ENCODE measurements at regions of chr19 and their contacts with region 1.

Region 1: DNA sequence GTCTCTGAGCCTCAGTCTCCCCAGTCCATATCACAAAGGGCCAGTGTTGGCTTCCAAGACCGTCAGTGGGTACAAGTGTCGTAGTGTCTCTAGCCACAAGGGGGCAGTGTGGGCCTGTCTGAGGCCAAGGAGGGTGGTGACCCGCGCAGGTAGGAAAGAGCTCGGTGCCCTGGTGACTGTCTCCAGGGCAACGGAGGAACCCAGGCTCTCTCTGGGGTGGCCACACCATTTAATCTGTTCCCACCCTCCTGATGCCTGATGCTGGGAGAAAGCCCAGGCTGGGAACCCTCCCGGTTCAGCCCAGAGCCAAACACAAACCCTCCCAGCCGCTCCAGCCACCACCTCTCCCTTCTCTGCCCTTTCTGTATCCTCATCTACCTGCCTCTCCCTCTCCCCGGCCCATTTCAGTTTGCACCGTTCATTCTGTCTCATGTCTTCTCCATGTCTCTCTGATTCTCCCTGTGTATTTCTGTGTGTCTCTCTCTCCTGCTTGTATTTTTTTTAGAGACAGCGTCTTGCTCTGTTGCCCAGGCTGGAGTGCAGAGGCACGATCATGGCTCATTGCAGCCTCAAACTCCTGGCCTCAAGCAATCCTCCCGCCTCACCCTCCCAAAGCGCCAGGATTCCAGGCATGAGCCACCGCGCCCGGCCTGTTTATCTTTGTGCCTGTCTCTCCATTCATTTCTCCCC is 17.5 kb upstream of the MEIS3 start:
- DNase-seq: peak; percentile 47
- ATAC-seq: peak; percentile 96
- H3K4me3 ChIP-seq: no peak overlapping the region
- H3K27ac ChIP-seq: no peak overlapping the region
- H3K4me1 ChIP-seq: no peaks in the 10 kb centered on the region
- H3K27me3 ChIP-seq: peaks cover 15% of the 10 kb centered on the region
- CTCF ChIP-seq: peak; percentile 82
- POLR2A ChIP-seq: no peak
- RAD21 ChIP-seq: peak; percentile 93

Region 2: GRCh38 chr19:47330466-47330869 is 106.4 kb before region 1 on chr19:
- CTCF ChIA-PET with region 1: no interaction called
- POLR2A ChIA-PET with region 1: no interaction called
- dilution Hi-C with region 1: no loop called
- in situ Hi-C with region 1: no loop called
- intact Hi-C with region 1: no loop called
- DNase-seq: peak; percentile 59
- ATAC-seq: peak; percentile 90
- H3K4me3 ChIP-seq: no peak overlapping the region
- H3K27ac ChIP-seq: peak overlapping the region; percentile 60
- H3K4me1 ChIP-seq: peaks cover 3% of the 10 kb centered on the region; the same call in 1 of the 2 replicates
- H3K27me3 ChIP-seq: no peaks in the 10 kb centered on the region
- CTCF ChIP-seq: no peak
- POLR2A ChIP-seq: no peak
- RAD21 ChIP-seq: no peak

Region 3: DNA sequence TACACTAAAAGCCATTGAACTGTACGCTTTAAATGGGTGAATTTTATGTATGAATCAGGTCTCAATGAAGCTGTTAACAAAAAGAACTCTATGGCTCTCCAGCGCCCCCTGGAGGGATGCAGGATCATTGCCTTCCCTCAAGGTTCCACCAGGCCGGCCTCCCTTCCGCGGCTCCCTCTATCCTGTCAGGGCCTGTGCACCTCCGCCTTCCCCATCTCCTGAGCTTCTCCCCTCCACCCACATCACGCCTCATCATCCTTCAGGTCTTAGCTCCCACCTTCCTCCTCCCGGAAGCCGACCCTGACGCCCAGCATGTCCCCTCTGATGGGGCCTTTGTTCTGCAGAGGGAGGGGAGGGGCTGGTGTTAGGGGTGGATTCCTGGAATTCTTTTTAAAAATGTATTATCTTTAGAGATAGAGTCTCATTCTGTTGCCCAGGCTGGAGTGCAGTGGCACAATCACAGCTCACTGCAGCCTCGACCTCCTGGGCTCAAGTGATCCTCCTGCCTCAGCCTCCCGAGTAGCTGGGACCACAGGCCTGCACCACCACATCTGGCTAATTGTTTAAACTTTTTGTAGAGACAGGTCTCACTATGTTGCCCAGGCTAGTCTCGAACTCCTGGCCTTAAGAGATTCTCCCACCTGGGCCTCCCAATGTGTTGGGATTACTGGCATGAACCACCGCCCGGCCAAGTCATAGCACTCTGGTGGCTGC is 45.2 kb before region 1 on chr19:
- CTCF ChIA-PET with region 1: no interaction called
- POLR2A ChIA-PET with region 1: no interaction called
- dilution Hi-C with region 1: no loop called
- in situ Hi-C with region 1: no loop called
- intact Hi-C with region 1: no loop called
- DNase-seq: peak; percentile 66
- ATAC-seq: peak; percentile 95
- H3K4me3 ChIP-seq: no peak overlapping the region
- H3K27ac ChIP-seq: no peak overlapping the region
- H3K4me1 ChIP-seq: peaks cover 3% of the 10 kb centered on the region
- H3K27me3 ChIP-seq: peaks cover 8% of the 10 kb centered on the region; the same call in 1 of the 2 replicates
- CTCF ChIP-seq: peak; percentile 89
- POLR2A ChIP-seq: no peak
- RAD21 ChIP-seq: peak; percentile 82

Region 4: DNA sequence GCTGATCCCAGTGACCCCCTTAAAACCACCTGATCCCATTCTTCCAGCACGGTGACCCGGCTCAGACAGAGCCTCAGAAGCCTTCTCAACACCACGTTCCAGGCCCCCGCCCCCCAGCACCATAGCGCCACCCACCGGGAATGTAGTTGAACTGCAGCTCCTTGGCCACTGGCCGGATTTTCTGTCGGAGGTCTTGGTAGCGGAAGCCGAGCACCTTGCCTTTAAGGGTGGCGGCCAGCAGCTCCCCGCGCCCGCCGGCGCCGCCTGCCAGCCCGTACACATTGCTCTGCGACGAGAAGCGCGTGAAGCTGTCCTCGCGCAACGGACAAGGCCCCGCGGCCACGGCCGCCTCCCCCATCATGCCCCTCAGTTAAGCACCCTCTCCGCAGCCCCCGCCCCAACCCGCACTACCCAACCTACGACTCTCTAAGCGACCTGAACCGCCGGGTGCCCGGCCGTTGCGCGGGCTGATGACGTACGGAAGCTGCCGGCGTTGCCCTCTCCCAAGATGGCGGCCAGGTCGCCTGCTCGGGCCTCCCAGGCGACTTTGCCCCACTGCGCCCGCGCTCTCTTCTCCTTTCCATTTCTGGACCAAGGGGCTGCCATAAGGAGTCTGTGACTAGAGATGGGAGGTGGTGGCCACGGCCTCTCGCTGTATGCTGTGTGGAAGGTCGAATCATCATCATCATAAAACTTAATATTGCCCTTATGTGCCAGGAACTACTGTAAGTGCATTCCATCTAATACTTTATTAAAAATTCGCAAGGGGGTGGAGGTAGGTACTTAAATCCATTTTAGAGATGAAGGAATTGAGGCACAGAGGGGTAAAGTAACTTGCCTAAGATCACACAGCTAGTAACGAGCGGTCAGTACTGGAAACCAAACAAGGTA is 47.2 kb after region 1 on chr19 and contains the start of gene KPTN:
- CTCF ChIA-PET with region 1: interaction called, 5 read pairs
- POLR2A ChIA-PET with region 1: no interaction called
- dilution Hi-C with region 1: no loop called
- in situ Hi-C with region 1: no loop called
- intact Hi-C with region 1: loop called (anchors 5 kb)
- DNase-seq: peak; percentile 90
- ATAC-seq: peak; percentile 91
- H3K4me3 ChIP-seq: peak within 1 kb of the TSS; percentile 64
- H3K27ac ChIP-seq: peak within 1 kb of the TSS; percentile 97
- H3K4me1 ChIP-seq: peaks cover 2% of the 10 kb centered on the region; the same call in 1 of the 2 replicates
- H3K27me3 ChIP-seq: no peaks in the 10 kb centered on the region
- CTCF ChIP-seq: peak; percentile 96
- POLR2A ChIP-seq: peak; percentile 77
- RAD21 ChIP-seq: peak; percentile 57
- total RNA-seq, gene KPTN: 3.9 and 4.1 TPM in 2 replicates

Region 5: GRCh38 chr19:47514869-47515588 is 78.2 kb after region 1 on chr19 and contains the start of gene NAPA:
- CTCF ChIA-PET with region 1: no interaction called
- POLR2A ChIA-PET with region 1: no interaction called
- dilution Hi-C with region 1: no loop called
- in situ Hi-C with region 1: no loop called
- intact Hi-C with region 1: loop called (anchors 2 kb)
- DNase-seq: peak; percentile 100
- ATAC-seq: peak; percentile 97
- H3K4me3 ChIP-seq: peak within 1 kb of the TSS; percentile 87
- H3K27ac ChIP-seq: peak within 1 kb of the TSS; percentile 90
- H3K4me1 ChIP-seq: peaks cover 18% of the 10 kb centered on the region
- H3K27me3 ChIP-seq: peaks cover 2% of the 10 kb centered on the region; the same call in 1 of the 2 replicates
- CTCF ChIP-seq: no peak; the same call in 1 of the 2 replicates
- POLR2A ChIP-seq: peak; percentile 96
- RAD21 ChIP-seq: peak; percentile 68
- total RNA-seq, gene NAPA: 51.7 and 76.4 TPM in 2 replicates

Region 6: DNA sequence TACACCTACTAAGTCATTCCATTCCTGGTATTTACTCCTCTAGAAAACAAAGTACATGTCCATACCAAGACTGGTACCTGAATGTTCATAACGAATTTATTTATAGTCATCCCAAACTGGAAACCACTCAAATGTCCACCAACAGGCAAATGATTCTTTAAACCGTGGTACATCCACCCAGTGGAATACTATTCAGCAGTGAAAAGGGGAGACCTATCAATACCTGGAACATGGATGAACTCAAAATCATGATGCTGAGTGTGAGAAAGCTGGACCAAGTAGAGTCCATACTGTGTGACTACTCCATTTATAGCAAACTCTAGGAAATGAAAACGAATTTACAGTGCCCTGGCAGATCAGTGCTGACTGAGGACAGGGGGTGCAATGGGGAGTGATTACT is 89.9 kb after region 1 on chr19:
- CTCF ChIA-PET with region 1: no interaction called
- POLR2A ChIA-PET with region 1: no interaction called
- dilution Hi-C with region 1: no loop called
- in situ Hi-C with region 1: no loop called
- intact Hi-C with region 1: no loop called
- DNase-seq: no peak
- ATAC-seq: no peak
- H3K4me3 ChIP-seq: no peak overlapping the region
- H3K27ac ChIP-seq: no peak overlapping the region
- H3K4me1 ChIP-seq: peaks cover 2% of the 10 kb centered on the region; the same call in 1 of the 2 replicates
- H3K27me3 ChIP-seq: peaks cover 28% of the 10 kb centered on the region
- CTCF ChIP-seq: no peak
- POLR2A ChIP-seq: no peak
- RAD21 ChIP-seq: no peak

Region 7: GRCh38 chr19:47608074-47608918 is 171.4 kb after region 1 on chr19:
- CTCF ChIA-PET with region 1: no interaction called
- POLR2A ChIA-PET with region 1: no interaction called
- dilution Hi-C with region 1: no loop called
- in situ Hi-C with region 1: no loop called
- intact Hi-C with region 1: loop called (anchors 5 kb)
- DNase-seq: peak; percentile 90
- ATAC-seq: peak; percentile 94
- H3K4me3 ChIP-seq: peak overlapping the region; percentile 95
- H3K27ac ChIP-seq: peak overlapping the region; percentile 98
- H3K4me1 ChIP-seq: peaks cover 15% of the 10 kb centered on the region
- H3K27me3 ChIP-seq: no peaks in the 10 kb centered on the region
- CTCF ChIP-seq: peak; percentile 30; the same call in 1 of the 2 replicates
- POLR2A ChIP-seq: peak; percentile 80
- RAD21 ChIP-seq: peak; percentile 26

Region 8: GRCh38 chr19:47697863-47698609 is 261.2 kb after region 1 on chr19:
- CTCF ChIA-PET with region 1: interaction called, 6 read pairs
- POLR2A ChIA-PET with region 1: no interaction called
- dilution Hi-C with region 1: no loop called
- in situ Hi-C with region 1: no loop called
- intact Hi-C with region 1: loop called (anchors 1 kb)
- DNase-seq: peak; percentile 76
- ATAC-seq: peak; percentile 97
- H3K4me3 ChIP-seq: no peak overlapping the region
- H3K27ac ChIP-seq: no peak overlapping the region
- H3K4me1 ChIP-seq: no peaks in the 10 kb centered on the region
- H3K27me3 ChIP-seq: no peaks in the 10 kb centered on the region
- CTCF ChIP-seq: peak; percentile 99
- POLR2A ChIP-seq: 0 out of 2 replicates have a peak, but pooled peaks have one; percentile 48
- RAD21 ChIP-seq: peak; percentile 100

Region 9: DNA sequence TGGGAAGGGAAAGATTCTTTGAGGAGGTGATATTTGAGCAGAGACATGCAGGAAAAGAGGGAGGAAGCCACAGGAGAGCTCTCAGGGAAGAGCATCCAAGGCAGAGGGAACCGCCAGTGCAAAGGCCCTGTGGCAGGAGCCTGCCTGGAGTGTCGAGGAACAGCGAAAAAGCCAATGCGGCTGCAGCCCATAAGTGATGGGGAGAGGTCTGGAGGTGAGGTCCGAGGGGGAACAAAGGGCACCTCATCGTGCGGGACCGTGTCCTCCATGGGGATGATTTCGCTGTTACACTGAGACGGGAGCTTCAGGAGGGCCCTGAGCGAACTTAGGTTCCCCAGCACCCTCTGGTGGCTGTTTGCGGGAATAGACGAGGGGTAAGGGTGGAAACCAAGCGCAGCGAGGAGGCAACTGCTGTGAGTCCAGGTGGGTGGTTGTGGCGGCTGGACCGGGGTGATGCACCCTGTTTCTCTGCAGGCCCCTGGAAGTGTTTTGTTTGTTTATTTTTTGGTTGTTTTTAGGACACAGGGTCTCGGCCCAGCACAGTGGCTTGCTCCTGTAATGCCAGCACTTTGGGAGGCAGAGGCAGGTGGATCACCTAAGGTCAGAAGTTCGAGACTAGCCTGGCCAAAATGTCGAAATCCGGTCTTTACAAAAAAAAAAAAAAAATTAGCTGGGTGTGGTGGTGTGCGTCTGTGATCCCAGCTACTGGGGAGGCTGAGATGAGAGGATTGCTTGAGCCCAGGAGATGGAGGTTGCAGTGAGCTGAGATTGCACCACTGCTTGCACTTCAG is 270.5 kb after region 1 on chr19:
- CTCF ChIA-PET with region 1: interaction called, 20 read pairs
- POLR2A ChIA-PET with region 1: no interaction called
- dilution Hi-C with region 1: no loop called
- in situ Hi-C with region 1: loop called (anchors 5 kb)
- intact Hi-C with region 1: loop called (anchors 1 kb)
- DNase-seq: peak; percentile 75
- ATAC-seq: peak; percentile 89
- H3K4me3 ChIP-seq: no peak overlapping the region
- H3K27ac ChIP-seq: no peak overlapping the region
- H3K4me1 ChIP-seq: peaks cover 5% of the 10 kb centered on the region
- H3K27me3 ChIP-seq: no peaks in the 10 kb centered on the region
- CTCF ChIP-seq: peak; percentile 88
- POLR2A ChIP-seq: 0 out of 2 replicates have a peak, but pooled peaks have one; percentile 27
- RAD21 ChIP-seq: peak; percentile 89

Region 10: DNA sequence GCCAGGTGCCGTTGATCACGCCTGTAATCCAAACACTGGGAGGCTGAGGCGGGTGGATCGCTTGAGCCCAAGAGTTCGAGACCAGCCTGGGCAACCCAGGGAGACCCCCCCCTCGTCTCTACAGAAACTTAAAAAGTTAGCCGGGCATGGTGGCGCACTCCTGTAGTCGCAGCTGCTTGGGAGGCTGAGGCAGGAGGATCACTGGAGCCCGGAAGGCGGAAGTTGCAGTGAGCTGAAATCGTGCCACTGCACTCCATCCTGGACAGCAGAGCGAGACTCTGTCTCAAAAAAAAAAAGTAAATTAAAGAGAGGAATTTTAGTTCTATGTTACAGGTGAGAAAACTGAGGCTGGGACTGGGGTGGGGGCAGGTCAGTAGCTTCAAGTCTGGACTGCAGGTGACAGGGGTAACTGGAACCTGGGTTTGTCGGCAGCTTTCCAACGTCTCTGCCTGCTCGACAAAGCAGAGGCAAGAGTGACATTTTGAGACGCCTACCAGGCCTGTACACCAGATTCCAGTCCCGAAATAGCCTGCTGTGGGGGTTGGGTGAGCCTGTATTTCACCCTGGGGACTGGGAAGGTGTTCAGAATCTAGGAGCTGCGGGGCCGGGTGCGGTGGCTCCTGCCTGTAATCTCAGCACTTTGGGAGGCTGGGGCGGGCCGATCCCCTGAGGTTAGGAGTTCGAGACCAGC is 342.8 kb after region 1 on chr19:
- CTCF ChIA-PET with region 1: no interaction called
- POLR2A ChIA-PET with region 1: no interaction called
- dilution Hi-C with region 1: no loop called
- in situ Hi-C with region 1: loop called (anchors 10 kb)
- intact Hi-C with region 1: no loop called
- DNase-seq: no peak
- ATAC-seq: no peak
- H3K4me3 ChIP-seq: peak overlapping the region; percentile 90
- H3K27ac ChIP-seq: no peak overlapping the region
- H3K4me1 ChIP-seq: peaks cover 2% of the 10 kb centered on the region; the same call in 1 of the 2 replicates
- H3K27me3 ChIP-seq: no peaks in the 10 kb centered on the region
- CTCF ChIP-seq: no peak
- POLR2A ChIP-seq: no peak
- RAD21 ChIP-seq: no peak